ENCODE measurements at regions of chr1 and their contacts with region 1.

Region 1: DNA sequence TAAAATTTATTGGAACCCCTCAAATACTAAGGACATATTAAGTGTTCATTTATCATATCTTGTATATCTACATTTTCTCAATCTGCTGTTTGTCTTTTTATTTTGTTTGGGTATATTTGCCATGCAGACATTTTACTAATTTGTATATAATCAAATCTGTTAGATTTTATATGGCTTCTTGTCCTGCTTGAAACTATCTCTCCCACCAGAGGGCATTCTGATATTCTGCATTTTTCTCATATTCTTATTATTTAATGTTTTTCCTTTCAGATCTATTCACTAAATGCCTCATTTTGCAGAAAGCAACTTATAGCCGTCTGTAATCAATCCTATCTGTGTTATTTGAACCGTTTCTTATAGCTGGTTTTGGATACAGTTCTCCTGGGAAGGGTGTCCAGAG is 745.5 kb downstream of the LRRIQ3 start:
- ATAC-seq: no peak
- H3K4me3 ChIP-seq: no peak overlapping the region
- H3K27ac ChIP-seq: no peak overlapping the region
- H3K4me1 ChIP-seq: no peaks in the 10 kb centered on the region

Region 2: DNA sequence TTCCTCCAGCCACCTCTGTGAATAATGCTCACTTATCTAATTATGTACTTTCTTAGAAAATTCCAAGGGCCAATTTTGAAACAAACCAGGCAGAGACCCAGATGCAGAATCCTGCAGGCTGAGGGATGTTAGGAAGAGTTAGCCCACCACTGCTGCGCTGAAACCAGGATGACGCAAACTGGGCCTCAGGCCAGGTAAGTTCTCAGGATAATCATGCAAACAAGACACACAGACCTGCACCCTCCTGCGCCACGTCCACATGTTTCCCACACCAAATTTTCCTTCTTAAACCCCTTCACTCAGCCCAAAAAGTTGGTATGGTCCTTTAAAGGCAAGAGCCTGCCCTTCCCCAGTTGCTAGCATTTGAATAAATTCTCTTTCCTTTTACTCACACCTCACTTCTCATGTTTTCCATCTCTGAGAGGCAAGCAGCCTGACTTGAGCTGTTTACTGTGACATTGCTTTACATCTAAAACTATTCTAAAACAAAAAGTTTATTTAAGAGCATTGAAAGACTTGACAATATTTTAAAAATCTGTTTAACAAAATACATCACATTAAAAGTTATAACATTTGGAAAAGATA is 141.6 kb before region 1 on chr1:
- in situ Hi-C with region 1: no loop called
- ATAC-seq: no peak
- H3K4me3 ChIP-seq: no peak overlapping the region
- H3K27ac ChIP-seq: no peak overlapping the region
- H3K4me1 ChIP-seq: peaks cover 0 to 8% of the 10 kb centered on the region in 2 donors

Region 3: DNA sequence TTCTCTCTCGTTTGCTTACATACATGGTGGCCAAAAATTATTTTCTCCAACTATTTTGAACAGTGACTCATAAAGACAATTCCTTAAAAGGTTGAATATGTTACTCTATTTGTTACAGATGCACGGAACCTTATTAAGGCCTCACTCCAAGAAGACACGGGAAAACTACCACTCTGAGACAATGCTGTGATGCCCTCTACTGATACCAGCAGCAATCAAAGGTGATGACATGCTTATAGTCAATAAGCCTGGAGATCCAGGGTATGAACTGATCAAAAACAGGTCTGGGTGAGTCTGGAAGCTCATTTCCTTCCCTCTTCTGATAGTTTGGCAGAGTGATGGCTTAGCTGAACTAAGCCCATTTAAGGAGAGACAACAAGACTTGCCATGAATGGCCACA is 182.5 kb after region 1 on chr1:
- in situ Hi-C with region 1: loop called in 1 of 9 experiments (anchors 25 kb)
- ATAC-seq: peak in 2 of 8 experiments; percentile 29 to 42
- H3K4me3 ChIP-seq: no peak overlapping the region
- H3K27ac ChIP-seq: no peak overlapping the region
- H3K4me1 ChIP-seq: no peaks in the 10 kb centered on the region

Measured in motor neuron (in vitro differentiated cells).